ENCODE measurements at regions of chr18 and their contacts with region 1.

Region 1: DNA sequence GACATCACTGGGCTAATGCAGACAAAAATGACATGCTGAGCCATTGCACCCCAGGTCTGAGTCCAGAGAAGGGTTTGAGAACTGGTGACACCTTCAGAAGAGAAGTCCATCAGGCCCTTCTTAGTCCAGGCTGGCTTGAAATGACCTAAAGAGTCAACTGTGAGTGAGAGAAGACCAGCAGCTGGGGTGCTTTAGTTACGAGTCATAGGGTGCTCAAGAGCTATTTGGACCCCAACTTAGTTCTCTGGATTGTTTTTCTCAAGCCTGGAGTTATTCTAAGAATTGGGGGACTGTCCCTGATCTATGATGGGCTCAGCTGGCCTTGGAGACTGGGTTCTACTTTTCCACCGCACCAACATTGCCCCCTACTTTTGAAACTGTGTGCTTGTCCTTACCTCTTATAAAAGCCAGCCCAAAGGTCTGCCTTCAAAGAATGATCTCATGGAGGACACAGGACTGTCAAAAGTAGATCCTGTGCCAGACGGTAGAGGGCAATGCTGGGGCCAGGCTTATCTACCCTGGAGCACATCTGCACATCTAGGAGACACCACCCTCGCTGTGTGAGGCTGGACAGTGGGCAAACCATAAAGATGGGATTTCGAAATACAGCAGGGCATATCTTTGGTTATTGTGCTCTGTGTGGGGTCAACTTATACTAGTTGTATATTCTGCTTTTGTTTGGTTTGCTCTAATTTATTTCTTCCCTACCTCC is 333.0 kb upstream of the SLC14A2 start:
- DNase-seq: peak in 2 of 4 experiments; percentile 4 to 11
- ATAC-seq: peak; percentile 72
- H3K4me3 ChIP-seq: no peak overlapping the region
- H3K27ac ChIP-seq: no peak overlapping the region
- H3K4me1 ChIP-seq: no peaks in the 10 kb centered on the region
- H3K27me3 ChIP-seq: no peaks in the 10 kb centered on the region
- CTCF ChIP-seq: peak; percentile 11 to 34 (median 32); a peak in 3 of 6 replicates
- EP300 ChIP-seq: no peak
- POLR2A ChIP-seq: no peak
- RAD21 ChIP-seq: 0 out of 4 replicates have a peak, but pooled peaks have one; percentile 10 to 20

Region 2: DNA sequence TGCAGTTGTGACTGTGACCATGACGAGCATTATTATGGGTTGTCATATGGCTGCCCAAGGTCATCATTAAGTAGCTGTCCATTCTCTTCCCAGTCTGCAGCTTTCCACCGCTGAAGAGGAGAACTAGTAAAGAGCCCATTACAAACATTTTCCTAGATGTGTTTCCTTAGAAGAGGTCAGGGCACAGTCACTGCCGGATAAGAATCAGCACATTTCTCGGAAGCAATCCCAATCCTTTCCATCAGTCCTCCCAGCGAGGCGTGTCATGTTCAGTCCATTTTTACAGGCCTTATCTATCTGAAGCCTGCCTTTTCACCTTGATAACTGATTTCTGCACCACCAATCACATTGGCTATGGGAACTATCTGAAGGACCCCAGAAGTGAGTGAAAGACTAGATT is 13.1 kb after region 1 on chr18:
- CTCF ChIA-PET with region 1: no interaction called
- POLR2A ChIA-PET with region 1: no interaction called
- in situ Hi-C with region 1: no loop called
- intact Hi-C with region 1: no loop called
- DNase-seq: peak in 1 of 4 experiments; percentile 1
- ATAC-seq: no peak
- H3K4me3 ChIP-seq: no peak overlapping the region
- H3K27ac ChIP-seq: no peak overlapping the region
- H3K4me1 ChIP-seq: no peaks in the 10 kb centered on the region
- H3K27me3 ChIP-seq: no peaks in the 10 kb centered on the region
- CTCF ChIP-seq: no peak
- EP300 ChIP-seq: no peak
- POLR2A ChIP-seq: no peak
- RAD21 ChIP-seq: no peak

Region 3: DNA sequence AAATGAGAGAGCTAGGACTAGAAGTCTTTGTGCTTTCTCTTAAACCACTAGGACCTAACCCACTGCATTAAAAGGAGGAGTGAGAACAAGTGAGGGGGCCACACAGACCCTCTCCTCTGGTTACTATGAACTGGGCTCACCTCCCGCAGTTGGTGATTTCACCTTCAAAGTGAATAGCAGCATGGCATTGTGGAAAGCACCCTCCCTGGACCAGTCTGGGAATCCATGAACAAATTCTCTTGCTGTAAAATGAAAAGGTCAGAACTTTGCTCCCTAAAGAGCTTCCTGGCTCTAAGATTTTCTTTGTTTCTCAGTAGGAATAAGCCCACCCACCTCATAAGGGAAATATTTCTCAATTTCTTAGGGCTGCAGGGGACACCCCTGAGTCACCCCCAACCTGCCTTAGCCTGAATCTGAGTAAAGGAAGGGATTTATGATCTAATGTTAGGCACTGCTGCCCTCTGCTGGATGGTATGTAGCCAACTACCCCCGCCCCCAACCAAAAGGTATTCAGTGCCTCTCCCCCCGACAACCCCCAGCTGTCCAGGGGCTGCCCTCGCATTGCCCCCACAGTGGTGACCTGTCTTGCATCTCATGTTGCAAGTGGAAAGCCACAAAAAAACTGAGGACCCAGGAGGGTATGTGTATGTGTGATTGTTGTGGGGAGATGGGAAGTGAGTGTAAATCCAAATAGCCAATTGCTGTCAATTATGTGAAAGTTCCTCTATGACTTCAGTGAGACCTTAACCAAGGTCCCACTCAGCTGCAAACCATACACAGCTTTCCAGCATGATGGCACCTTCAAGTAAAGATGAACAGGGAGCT is 102.1 kb after region 1 on chr18:
- CTCF ChIA-PET with region 1: interaction called, 4 read pairs
- POLR2A ChIA-PET with region 1: no interaction called
- in situ Hi-C with region 1: no loop called
- intact Hi-C with region 1: loop called (anchors 2 kb)
- DNase-seq: peak; percentile 54 to 65 (median 59)
- ATAC-seq: peak; percentile 88
- H3K4me3 ChIP-seq: no peak overlapping the region
- H3K27ac ChIP-seq: no peak overlapping the region
- H3K4me1 ChIP-seq: no peaks in the 10 kb centered on the region
- H3K27me3 ChIP-seq: no peaks in the 10 kb centered on the region
- CTCF ChIP-seq: peak; percentile 46 to 62 (median 48); a peak in 5 of 6 replicates
- EP300 ChIP-seq: no peak
- POLR2A ChIP-seq: no peak
- RAD21 ChIP-seq: peak; percentile 54 to 60